Left ventricle myocardium inferior (tissue), 1 donor: ENCODE measurements at regions of chr16 and their contacts with region 1.

Region 1: DNA sequence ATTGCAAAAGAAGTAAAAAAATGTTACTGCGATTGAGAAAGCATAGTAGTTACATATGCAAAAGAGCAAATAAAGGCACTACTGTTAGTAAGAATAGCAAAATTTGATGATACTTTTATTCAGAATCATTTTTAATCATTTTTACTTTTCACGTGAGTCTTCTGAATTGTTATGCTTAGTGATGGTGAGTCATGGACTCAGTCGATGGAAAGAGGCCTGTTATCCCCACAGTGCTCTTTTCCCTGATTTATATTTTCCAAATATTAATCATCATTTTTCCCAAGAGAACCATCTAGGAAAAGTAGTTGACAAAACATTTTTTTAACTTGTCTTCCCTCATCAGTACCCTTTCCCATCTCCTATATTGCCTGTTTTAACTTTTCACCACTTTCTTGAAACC is 181.1 kb downstream of the CHD9 start:
- DNase-seq: no peak
- H3K4me3 ChIP-seq: no peak overlapping the region
- H3K27ac ChIP-seq: no peak overlapping the region
- H3K4me1 ChIP-seq: no peaks in the 10 kb centered on the region
- H3K27me3 ChIP-seq: no peaks in the 10 kb centered on the region
- CTCF ChIP-seq: no peak

Region 2: DNA sequence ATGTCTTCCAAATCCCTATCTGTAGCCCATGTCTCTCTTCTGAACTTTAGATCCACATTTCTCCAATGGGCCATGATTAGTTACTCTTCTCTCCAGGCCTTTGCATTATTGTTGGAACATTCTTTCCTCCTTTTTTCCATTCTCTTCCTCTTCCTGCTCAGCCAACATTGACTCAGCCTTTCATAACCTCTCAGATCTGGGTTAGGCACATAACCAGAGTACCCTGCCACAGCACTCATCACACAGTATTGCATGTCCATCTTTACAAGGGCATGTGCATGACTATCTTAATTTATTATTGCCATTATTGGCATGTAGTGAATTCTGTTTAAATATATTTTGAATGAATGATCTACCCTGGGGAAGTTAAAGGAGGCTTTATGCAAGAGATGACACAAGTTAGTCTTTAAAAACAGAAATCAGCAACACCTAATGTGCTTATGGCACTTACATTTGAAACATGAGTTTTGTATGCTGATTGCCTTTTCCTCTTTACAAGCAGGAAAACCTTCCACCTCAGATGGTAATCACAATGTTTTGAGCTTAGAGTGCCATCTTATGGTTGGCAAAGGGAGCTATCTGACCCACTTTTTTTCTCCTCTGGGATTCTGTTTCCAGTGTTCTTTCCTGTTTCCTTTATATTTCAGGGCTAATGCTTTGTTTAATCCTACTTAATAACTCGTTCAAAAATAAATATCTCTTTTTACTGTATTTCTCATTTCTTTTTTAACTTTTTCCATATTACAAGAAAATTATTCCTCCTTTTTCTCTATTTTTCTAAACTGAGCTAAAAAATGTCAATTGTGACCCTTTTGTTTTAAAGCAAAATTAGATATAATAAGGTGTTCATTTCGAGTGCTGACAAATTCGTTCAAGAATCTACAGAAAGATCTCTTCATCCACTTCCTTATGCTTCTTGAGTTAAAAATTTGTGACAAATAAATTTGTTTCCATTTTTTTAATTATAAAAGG is 47.4 kb after region 1 on chr16:
- intact Hi-C with region 1: loop called (anchors 10 kb)
- DNase-seq: no peak
- H3K4me3 ChIP-seq: no peak overlapping the region
- H3K27ac ChIP-seq: peak overlapping the region; percentile 33
- H3K4me1 ChIP-seq: peaks cover 12% of the 10 kb centered on the region
- H3K27me3 ChIP-seq: no peaks in the 10 kb centered on the region
- CTCF ChIP-seq: peak; percentile 53

Region 3: GRCh38 chr16:53457670-53458069 is 221.8 kb after region 1 on chr16:
- intact Hi-C with region 1: no loop called
- DNase-seq: no peak
- H3K4me3 ChIP-seq: no peak overlapping the region
- H3K27ac ChIP-seq: no peak overlapping the region
- H3K4me1 ChIP-seq: no peaks in the 10 kb centered on the region
- H3K27me3 ChIP-seq: no peaks in the 10 kb centered on the region
- CTCF ChIP-seq: no peak